ENCODE measurements at regions of chr1 and their contacts with region 1.

Region 1: GRCh38 chr1:151254217-151255213 is at the start of gene PSMD4:
- DNase-seq: peak; percentile 97
- total RNA-seq, gene PSMD4: 137 TPM

Region 2: DNA sequence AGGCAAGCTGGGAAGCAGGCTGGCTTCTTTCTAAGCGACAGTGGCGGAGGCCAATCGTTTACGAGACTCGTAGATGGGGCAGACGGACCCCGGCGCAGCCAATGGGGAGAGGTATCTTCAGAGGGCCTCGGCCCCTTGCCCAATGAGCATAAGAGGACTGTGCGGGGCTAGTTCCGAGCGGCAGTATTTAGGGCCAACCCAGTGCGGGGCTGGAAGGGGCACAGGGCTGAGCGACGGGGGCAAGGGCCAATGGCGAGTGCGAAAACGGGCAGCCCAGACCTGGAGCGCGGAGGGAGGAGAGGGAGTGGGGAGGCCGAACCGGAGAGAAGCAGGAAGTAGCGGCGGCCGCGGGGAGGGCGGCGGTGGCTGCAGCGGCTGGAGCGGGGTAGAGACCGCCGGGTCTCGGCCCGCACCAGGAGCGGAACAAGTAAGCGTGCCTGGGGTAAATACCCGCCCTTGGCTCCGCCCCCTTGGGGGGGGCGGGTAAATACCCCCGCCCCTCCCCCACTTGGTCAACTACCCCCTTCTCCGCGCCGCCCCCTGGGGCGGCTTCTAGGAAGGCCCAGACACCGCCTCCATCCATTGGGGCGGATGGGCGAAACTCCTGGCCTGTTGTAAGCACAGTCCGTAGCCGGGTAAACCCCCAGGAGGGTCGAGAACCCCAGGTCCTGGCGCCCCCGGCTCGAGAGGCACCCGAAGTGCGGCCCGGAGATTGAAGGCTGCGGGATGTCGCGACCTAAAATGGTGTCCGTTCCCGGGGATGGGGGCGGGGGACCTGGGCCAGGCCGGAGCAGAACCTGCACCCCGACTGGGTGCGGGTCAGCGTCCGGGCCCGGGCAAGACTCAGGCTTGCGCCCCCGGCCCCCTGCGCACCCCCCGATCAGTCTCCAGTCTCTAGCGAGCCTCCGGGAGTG is 27.7 kb after region 1 on chr1 and contains the start of gene ZNF687:
- intact Hi-C with region 1: loop called (anchors 2 kb)
- DNase-seq: peak; percentile 100
- total RNA-seq, gene ZNF687: 12.8 TPM

Region 3: GRCh38 chr1:151624783-151625182 is 370.3 kb after region 1 on chr1:
- intact Hi-C with region 1: no loop called
- DNase-seq: no peak